ENCODE measurements at regions of chr4 and their contacts with region 1.

Region 1: DNA sequence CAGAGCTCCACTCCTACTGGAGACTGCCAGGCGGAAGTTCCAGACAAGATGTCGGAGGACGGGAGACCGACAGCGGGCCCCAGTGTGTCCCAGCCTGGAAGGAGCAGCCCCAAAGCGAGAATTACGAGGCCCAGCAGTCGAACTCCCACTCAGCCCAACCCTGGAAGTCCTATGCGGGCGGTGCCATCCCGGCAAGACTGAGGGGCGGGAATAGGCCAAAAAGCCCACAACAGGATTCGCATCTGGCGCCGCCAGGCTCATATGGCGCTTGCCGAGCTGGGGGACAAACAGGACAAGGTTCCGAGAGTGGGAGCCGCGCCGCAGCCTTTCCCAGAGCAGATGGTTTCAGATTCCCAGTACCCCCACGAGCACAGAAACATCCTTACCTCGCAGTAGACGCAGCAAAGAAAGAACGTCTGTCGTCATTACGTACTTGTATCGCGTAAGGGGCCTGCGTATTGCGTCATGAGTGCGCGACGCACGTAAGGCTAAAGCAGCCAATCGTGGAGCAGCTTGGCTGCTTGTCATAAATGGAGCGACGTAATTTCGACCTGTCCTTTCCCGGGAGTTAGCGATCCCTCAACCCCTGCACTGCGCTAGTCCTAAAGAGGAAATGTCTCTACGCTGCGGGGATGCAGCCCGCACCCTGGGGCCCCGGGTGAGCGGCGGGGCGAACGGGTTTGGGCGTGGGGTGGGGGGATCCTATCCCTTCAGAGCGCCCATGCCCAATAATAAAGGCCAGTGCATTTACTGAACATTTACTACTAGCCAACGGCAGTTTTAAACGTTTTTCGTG is at the starts of genes LIAS and RPL9:
- DNase-seq: peak; percentile 97
- H3K4me3 ChIP-seq: peak within 1 kb of the TSS; percentile 66 to 100 (median 70)
- H3K27ac ChIP-seq: peak within 1 kb of the TSS; percentile 93
- H3K4me1 ChIP-seq: peaks cover 13% of the 10 kb centered on the region
- H3K27me3 ChIP-seq: no peaks in the 10 kb centered on the region
- CTCF ChIP-seq: no peak
- total RNA-seq, gene LIAS: 8.5 to 17.6 TPM
- total RNA-seq, gene RPL9: 524 to 1,844 TPM

Region 2: GRCh38 chr4:38902695-38903094 is 556.0 kb before region 1 on chr4:
- CTCF ChIA-PET with region 1: no interaction called
- dilution Hi-C with region 1: no loop called
- in situ Hi-C with region 1: no loop called
- intact Hi-C with region 1: loop called (anchors 10 kb)
- DNase-seq: peak; percentile 17
- H3K4me3 ChIP-seq: no peak overlapping the region
- H3K27ac ChIP-seq: no peak overlapping the region
- H3K4me1 ChIP-seq: no peaks in the 10 kb centered on the region
- H3K27me3 ChIP-seq: no peaks in the 10 kb centered on the region
- CTCF ChIP-seq: peak; percentile 7 to 30

Region 3: GRCh38 chr4:39446751-39447573 is 11.7 kb before region 1 on chr4:
- CTCF ChIA-PET with region 1: no interaction called
- dilution Hi-C with region 1: no loop called
- in situ Hi-C with region 1: no loop called
- intact Hi-C with region 1: loop called (anchors 1 kb)
- DNase-seq: peak; percentile 43
- H3K4me3 ChIP-seq: peak overlapping the region in 2 of 3 experiments; percentile 27 to 47
- H3K27ac ChIP-seq: no peak overlapping the region
- H3K4me1 ChIP-seq: peaks cover 12% of the 10 kb centered on the region
- H3K27me3 ChIP-seq: no peaks in the 10 kb centered on the region
- CTCF ChIP-seq: peak in 1 of 2 donors; percentile 15